ENCODE measurements at regions of chr4 and their contacts with region 1.

Region 1: DNA sequence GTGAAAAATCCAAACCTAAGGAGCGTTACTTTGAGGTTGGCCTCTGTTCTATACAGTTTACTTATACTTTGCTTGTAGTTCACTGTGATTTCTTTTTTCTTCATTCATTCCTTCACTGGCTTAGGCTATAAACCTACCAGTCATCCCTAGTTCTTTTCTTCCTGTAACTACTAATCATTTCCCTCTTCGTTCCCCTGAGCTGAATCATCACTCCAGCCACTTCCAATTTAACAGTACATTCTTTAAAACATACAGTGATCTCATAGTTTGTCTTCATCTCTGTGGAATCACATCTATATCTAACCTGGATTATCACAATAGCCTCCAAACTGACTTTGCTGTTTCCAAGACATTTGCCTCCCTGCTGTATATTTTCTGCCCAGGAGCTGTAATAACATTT is 25.2 kb upstream of the NPFFR2 start:
- DNase-seq: no peak
- H3K4me3 ChIP-seq: no peak overlapping the region
- H3K27ac ChIP-seq: no peak overlapping the region
- H3K4me1 ChIP-seq: no peaks in the 10 kb centered on the region
- H3K27me3 ChIP-seq: no peaks in the 10 kb centered on the region
- CTCF ChIP-seq: no peak
- EP300 ChIP-seq: no peak
- POLR2A ChIP-seq: no peak

Region 2: DNA sequence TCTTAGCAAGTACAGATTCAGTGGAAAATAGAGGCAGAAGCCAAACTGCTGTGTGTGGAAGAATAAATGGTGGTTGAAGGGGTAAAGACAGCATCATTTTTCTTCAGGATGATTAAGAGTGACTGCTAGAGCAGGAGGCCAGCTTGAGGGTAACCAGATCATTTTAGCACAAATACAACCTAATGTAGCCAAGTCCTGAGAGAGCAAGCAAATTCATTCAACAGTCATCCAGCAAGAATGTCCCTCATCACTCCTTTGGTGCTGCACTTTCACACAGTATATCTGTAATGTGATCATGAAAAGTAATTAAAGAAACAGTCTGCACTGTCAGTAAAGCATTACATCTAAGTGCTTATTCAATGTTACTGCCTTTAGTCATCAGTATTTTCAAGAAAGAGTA is 70.0 kb after region 1 on chr4:
- in situ Hi-C with region 1: no loop called
- intact Hi-C with region 1: no loop called
- DNase-seq: no peak
- H3K4me3 ChIP-seq: no peak overlapping the region
- H3K27ac ChIP-seq: no peak overlapping the region
- H3K4me1 ChIP-seq: no peaks in the 10 kb centered on the region
- H3K27me3 ChIP-seq: no peaks in the 10 kb centered on the region
- CTCF ChIP-seq: no peak
- EP300 ChIP-seq: no peak
- POLR2A ChIP-seq: no peak

Region 3: GRCh38 chr4:73450398-73451004 is 1443.9 kb after region 1 on chr4:
- in situ Hi-C with region 1: no loop called
- intact Hi-C with region 1: loop called (anchors 10 kb)
- DNase-seq: no peak
- H3K4me3 ChIP-seq: no peak overlapping the region
- H3K27ac ChIP-seq: no peak overlapping the region
- H3K4me1 ChIP-seq: peaks cover 0 to 12% (median 5%) of the 10 kb centered on the region in 4 donors
- H3K27me3 ChIP-seq: no peaks in the 10 kb centered on the region
- CTCF ChIP-seq: no peak
- EP300 ChIP-seq: no peak
- POLR2A ChIP-seq: no peak

Region 4: GRCh38 chr4:73520821-73521220 is 1514.2 kb after region 1 on chr4:
- in situ Hi-C with region 1: no loop called
- intact Hi-C with region 1: no loop called
- DNase-seq: no peak
- H3K4me3 ChIP-seq: no peak overlapping the region
- H3K27ac ChIP-seq: no peak overlapping the region
- H3K4me1 ChIP-seq: no peaks in the 10 kb centered on the region
- H3K27me3 ChIP-seq: no peaks in the 10 kb centered on the region
- CTCF ChIP-seq: no peak
- EP300 ChIP-seq: no peak
- POLR2A ChIP-seq: no peak

Region 5: DNA sequence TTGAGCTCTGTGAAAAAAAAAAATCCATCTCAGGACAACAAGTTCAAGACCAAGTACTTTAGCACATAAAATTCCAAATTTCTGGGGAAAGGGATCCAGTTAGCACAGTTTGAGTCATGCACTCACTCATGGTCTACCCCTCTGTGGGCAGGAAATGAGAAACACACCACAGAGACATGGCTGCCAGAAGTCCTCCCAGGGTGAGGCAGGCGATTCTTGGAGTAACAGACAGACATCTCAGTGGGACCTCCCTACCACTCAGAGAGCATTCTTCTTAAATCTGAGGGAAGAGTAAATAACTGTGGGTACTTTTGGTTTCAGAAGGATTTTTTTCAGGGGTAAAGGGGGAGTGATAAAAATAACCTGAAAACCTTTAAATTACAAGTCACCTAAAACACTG is 1876.7 kb after region 1 on chr4:
- in situ Hi-C with region 1: no loop called
- intact Hi-C with region 1: no loop called
- DNase-seq: no peak
- H3K4me3 ChIP-seq: no peak overlapping the region
- H3K27ac ChIP-seq: no peak overlapping the region
- H3K4me1 ChIP-seq: peaks cover 0 to 11% (median 4%) of the 10 kb centered on the region in 4 donors
- H3K27me3 ChIP-seq: no peaks in the 10 kb centered on the region
- CTCF ChIP-seq: no peak
- EP300 ChIP-seq: no peak
- POLR2A ChIP-seq: no peak